AG04449 (cell line): ENCODE measurements at regions of chr2 and their contacts with region 1.

Region 1: DNA sequence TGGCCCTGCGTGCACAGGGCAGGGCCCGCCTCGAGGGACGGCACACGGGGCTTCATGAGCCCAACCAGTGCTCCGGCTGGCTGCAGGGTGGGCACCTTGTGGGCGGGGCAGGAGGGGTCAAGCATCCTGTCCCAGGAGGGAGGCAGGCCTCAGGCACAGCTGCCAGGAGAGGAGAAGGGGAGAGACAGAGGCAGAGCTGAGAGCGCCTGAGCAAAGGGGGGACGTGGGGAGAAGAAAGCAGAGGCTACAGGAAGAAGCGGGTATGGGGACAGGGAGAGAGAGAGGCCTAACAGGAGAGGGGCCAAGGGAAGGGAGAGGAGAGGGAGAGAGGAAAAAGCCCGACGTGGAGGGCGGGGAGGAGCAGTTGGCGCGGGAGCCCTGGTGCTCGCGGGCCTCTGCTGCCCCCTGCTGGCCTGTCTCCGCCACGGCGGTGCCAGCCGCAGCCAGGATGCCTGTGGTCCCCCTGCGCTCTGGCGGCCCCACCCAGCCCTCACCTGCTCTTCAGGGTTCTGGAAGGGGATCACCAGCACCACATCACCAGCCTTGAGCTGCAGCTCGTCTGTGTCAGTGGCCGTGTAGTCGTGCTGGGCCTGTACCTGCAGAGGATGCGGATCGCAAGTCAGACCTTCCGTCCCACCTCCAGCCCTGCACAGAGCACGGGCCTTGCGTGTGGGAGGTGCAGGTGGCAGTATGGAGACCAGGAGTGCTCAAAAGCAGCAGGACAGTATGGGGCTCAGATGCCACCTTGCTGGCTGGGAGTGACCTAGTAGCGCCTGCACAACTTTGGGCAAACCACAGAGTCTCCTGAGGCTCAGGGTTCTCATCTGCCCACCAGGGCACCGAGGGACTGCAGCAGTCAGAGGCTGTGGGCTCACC is 56.8 kb downstream of the BIN1 start:
- DNase-seq: no peak
- H3K4me3 ChIP-seq: no peak overlapping the region
- CTCF ChIP-seq: peak; percentile 98

Region 2: DNA sequence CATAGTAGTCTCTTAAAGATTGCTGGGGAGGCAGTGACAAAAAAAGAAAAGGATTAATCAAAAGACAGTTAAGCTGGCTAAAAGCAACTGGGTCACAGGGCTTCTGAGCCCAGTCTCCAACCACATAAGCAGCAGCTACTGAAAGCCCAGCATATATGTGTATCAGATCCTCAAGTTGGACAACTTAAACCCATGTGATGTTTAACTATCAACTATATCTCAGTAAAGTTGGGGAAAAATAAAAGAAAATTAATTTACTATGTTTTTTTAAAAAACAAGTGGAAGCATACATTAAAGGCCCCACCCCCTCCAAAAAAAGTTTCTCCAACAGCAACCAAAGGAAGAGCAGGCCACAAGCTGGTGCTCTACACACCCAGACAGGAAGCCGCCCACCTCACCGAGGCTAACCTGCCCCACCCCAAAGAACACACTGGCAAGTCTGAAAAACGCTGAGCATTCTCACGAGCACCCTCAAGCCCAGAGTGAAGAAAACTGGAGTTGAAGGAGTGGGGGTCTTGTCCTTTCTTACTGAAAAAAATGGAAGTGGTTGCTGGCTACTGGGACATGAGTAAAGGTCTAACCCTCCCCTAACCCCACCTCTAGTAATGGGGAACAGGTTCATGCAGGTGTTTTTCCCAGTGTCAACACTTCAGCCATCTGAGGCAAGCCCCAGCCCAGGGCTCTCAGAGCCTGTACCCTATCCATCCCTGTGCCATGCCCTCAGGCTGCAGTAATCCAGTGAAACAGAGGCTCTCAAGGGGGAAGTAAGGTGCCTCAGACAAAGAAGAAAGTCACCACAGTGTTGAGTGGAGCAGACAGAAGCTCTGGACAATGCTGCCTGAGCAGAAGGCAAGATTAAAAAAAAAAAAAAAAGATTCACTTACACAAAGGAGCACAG is 287.9 kb before region 1 on chr2:
- CTCF ChIA-PET with region 1: no interaction called
- POLR2A ChIA-PET with region 1: no interaction called
- DNase-seq: no peak
- H3K4me3 ChIP-seq: no peak overlapping the region
- CTCF ChIP-seq: no peak

Region 3: DNA sequence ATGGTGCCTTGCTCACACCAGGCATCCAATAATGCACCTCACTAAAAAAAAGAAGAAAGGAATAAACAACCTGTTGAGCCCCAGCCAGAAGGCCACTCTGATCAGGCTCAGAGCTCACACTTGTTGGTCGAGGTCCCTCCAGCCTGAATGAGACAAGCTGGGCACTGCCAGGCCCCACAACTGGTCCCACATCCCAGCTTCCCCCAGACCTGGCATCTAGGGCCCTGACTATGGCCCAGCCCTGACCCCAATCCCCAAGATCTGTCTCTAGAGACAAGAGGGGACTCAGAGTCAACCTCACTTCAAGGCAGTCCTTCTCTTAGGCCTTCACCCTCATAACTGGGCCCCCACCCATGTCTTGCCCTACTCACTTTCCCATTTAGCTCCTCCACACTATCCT is 129.1 kb before region 1 on chr2:
- CTCF ChIA-PET with region 1: no interaction called
- POLR2A ChIA-PET with region 1: no interaction called
- DNase-seq: no peak
- H3K4me3 ChIP-seq: no peak overlapping the region
- CTCF ChIP-seq: no peak

Region 4: DNA sequence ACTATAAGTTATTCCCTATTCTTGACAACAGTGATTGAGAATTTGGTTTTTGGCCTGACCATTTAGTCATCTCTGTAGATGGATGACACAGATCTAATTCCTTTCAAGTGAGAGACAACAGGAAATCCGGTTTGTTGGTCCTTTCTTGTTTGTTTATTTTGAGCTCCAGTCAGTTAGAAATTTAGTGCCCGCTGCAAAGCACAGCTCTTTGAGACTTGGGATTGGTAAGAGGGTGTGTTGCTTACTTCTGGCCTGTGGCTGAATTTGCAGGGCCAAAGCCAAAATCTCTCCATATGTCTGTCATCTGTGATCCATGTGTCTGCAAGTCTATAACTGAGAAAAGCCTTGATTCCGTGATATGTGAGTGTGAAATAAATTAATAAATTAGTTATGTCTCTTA is 17.5 kb before region 1 on chr2:
- CTCF ChIA-PET with region 1: interaction called, 16 read pairs
- POLR2A ChIA-PET with region 1: no interaction called
- DNase-seq: no peak
- H3K4me3 ChIP-seq: no peak overlapping the region
- CTCF ChIP-seq: no peak

Region 5: DNA sequence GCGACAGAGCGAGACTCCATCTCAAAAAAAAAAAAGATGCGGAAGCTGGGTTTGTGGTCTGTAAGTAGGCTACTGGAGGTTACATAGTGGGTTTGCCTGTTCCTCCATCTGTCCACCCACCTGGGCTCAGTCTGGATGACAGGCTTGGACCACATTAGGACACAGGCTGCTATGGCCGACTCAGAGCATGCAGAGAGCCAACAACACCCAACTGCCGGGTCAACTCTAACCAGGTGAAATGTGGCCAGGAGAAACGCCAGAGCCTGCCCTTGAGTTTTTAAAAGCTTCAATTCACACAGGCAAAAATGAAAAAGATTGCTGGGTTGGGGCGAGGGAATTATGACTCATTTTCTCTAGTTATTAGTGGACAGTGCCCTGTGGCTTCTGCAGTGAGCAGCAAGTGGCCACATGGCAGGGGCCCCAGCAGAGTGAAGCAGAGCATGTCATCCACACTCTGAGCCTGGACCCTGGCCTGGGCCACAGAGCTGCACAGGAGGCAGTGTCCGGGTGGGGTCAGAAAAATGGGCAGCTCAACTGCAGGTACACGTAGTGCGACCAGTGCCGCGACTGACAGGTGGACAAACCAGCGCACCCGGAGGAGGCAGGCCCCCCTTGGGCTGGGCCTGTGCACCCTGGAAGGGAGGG is 10.7 kb before region 1 on chr2:
- CTCF ChIA-PET with region 1: interaction called, 16 read pairs
- POLR2A ChIA-PET with region 1: no interaction called
- DNase-seq: no peak
- H3K4me3 ChIP-seq: no peak overlapping the region
- CTCF ChIP-seq: no peak

Region 6: GRCh38 chr2:127064642-127065250 is 14.6 kb after region 1 on chr2:
- CTCF ChIA-PET with region 1: interaction called, 57 read pairs
- POLR2A ChIA-PET with region 1: no interaction called
- DNase-seq: peak; percentile 79
- H3K4me3 ChIP-seq: no peak overlapping the region
- CTCF ChIP-seq: peak; percentile 27

Region 7: GRCh38 chr2:127219171-127220070 is 169.3 kb after region 1 on chr2:
- CTCF ChIA-PET with region 1: no interaction called
- POLR2A ChIA-PET with region 1: no interaction called
- DNase-seq: no peak
- H3K4me3 ChIP-seq: peak overlapping the region; percentile 64
- CTCF ChIP-seq: no peak